ENCODE measurements at regions of chr2 and their contacts with region 1.

Region 1: DNA sequence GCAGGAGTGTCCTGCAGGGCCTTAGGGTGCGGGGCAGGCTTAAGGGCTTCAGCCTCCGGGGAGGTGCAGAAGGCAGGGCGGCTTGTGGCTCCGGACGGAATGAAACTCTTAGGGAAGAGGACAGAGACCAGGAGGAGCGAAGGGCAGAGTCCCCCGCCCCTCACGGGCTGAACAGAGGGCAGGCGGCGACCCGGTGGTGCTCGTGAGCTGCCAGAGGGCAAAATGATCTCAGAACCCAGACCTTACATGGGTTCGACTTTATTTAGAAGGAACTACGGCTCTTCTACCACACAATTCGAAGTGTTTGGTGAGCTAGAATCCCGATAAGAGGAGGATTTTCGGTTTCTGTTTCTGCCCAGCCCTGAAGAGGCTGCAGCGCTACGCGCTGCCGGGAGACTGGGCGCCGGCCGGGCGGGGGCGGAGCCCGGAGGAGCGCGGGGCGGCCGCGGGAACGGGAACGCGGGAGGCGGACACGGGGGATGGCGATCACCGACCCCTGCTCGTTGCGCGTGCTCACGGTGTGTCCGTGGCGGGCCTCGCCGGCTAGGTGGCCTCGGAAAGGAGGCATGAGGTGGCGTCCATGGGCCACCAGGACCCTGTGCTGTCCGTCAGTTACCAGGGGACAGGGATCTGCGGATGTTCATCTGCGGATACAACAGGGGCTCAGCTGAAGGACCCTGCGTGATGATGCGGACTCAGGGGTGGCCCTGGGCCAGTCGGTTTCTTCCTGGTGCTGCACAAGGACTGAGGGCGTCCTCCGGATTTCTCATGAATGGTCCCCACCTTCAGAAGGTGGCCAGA is 4.2 kb upstream of the SP100 start:
- DNase-seq: peak in 8 of 9 experiments; percentile 37 to 83 (median 59)
- ATAC-seq: peak; percentile 67
- H3K4me3 ChIP-seq: peak overlapping the region; percentile 88 to 92
- H3K4me3 Mint-ChIP-seq: peak overlapping the region; percentile 100
- H3K27ac ChIP-seq: peak overlapping the region; percentile 83 to 92
- H3K27ac Mint-ChIP-seq: peak overlapping the region; percentile 100
- H3K4me1 ChIP-seq: peaks cover 53% of the 10 kb centered on the region
- H3K4me1 Mint-ChIP-seq: peaks cover 81% of the 10 kb centered on the region
- H3K27me3 ChIP-seq: no peaks in the 10 kb centered on the region
- H3K27me3 Mint-ChIP-seq: no peaks in the 10 kb centered on the region
- CTCF ChIP-seq: no peak

Region 2: GRCh38 chr2:230219419-230220331 is 192.1 kb before region 1 on chr2 and contains the start of gene SP110:
- CTCF ChIA-PET with region 1: no interaction called
- POLR2A ChIA-PET with region 1: no interaction called
- intact Hi-C with region 1: loop called (anchors 2 kb)
- DNase-seq: peak; percentile 52 to 89 (median 78)
- ATAC-seq: peak; percentile 93
- H3K4me3 ChIP-seq: peak within 1 kb of the TSS; percentile 90 to 96
- H3K4me3 Mint-ChIP-seq: peak within 1 kb of the TSS; percentile 98
- H3K27ac ChIP-seq: peak within 1 kb of the TSS; percentile 82 to 88
- H3K27ac Mint-ChIP-seq: peak within 1 kb of the TSS; percentile 99
- H3K4me1 ChIP-seq: peaks cover 36% of the 10 kb centered on the region
- H3K4me1 Mint-ChIP-seq: peaks cover 60% of the 10 kb centered on the region
- H3K27me3 ChIP-seq: no peaks in the 10 kb centered on the region
- H3K27me3 Mint-ChIP-seq: no peaks in the 10 kb centered on the region
- CTCF ChIP-seq: no peak
- total RNA-seq, gene SP110: 50.6 to 58.1 TPM

Region 3: DNA sequence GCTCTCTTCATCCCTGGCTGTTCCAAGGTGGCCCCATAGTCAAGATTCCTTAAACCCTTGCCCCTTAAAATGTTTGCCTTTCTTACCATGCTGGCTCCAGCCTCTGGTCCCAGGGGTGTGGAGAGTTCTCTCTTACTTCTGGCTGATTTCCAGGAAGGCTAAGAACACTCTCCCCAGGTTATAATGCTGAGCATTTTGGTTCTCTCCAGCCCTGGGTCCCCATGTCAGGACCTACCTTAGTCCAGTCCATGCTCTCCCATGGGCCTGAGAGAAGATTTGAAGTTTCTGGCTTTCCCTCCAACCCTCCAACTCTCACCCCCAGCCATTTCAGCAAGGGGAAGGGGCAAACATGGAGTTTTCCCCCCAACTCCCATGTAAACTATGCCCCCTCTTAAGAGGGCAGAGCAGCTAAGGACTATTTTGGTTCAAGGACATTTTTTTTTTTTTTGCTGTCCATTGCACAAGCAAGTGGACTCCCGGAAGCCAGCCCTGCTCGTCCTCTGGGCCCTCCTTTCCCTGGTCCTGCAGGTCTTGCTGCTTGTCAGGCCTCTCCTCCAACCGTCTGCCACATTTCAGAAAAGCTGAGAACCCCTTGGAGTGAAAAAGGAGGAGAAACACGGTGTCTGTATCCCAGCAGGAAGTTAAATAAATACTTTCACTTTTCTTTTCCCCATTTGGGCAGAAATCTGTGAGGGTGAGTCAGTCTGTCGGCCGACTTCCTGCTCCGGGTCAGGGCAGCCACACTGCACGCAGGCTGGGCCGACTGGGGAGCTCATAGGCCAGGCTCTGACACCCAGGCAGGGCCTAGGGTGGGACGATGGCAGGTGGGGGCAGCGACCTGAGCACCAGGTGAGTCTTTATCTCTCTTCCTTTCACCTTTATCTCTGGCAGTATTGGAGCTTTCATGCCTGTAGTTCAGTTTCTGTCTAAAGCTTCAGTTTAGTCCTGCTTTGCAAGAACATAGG is 85.0 kb before region 1 on chr2 and contains the start of gene SP140L:
- CTCF ChIA-PET with region 1: no interaction called
- POLR2A ChIA-PET with region 1: interaction called, 5 read pairs
- intact Hi-C with region 1: loop called (anchors 5 kb)
- DNase-seq: peak; percentile 56 to 91 (median 82)
- ATAC-seq: peak; percentile 100
- H3K4me3 ChIP-seq: peak within 1 kb of the TSS; percentile 63 to 80
- H3K4me3 Mint-ChIP-seq: peak within 1 kb of the TSS; percentile 96
- H3K27ac ChIP-seq: peak within 1 kb of the TSS; percentile 88 to 90
- H3K27ac Mint-ChIP-seq: peak within 1 kb of the TSS; percentile 99
- H3K4me1 ChIP-seq: peaks cover 44% of the 10 kb centered on the region
- H3K4me1 Mint-ChIP-seq: peaks cover 80% of the 10 kb centered on the region
- H3K27me3 ChIP-seq: no peaks in the 10 kb centered on the region
- H3K27me3 Mint-ChIP-seq: no peaks in the 10 kb centered on the region
- CTCF ChIP-seq: no peak
- total RNA-seq, gene SP140L: 69.8 to 70.5 TPM

Region 4: GRCh38 chr2:230447455-230448451 is 36.0 kb after region 1 on chr2:
- CTCF ChIA-PET with region 1: no interaction called
- POLR2A ChIA-PET with region 1: interaction called, 3 read pairs
- intact Hi-C with region 1: loop called (anchors 5 kb)
- DNase-seq: peak in 2 of 9 experiments; percentile 46 to 71
- ATAC-seq: peak; percentile 81
- H3K4me3 ChIP-seq: no peak overlapping the region
- H3K4me3 Mint-ChIP-seq: peak overlapping the region; percentile 40
- H3K27ac ChIP-seq: peak overlapping the region; percentile 30 to 32
- H3K27ac Mint-ChIP-seq: peak overlapping the region; percentile 91
- H3K4me1 ChIP-seq: peaks cover 30% of the 10 kb centered on the region
- H3K4me1 Mint-ChIP-seq: peaks cover 56% of the 10 kb centered on the region
- H3K27me3 ChIP-seq: no peaks in the 10 kb centered on the region
- H3K27me3 Mint-ChIP-seq: no peaks in the 10 kb centered on the region
- CTCF ChIP-seq: no peak

Region 5: DNA sequence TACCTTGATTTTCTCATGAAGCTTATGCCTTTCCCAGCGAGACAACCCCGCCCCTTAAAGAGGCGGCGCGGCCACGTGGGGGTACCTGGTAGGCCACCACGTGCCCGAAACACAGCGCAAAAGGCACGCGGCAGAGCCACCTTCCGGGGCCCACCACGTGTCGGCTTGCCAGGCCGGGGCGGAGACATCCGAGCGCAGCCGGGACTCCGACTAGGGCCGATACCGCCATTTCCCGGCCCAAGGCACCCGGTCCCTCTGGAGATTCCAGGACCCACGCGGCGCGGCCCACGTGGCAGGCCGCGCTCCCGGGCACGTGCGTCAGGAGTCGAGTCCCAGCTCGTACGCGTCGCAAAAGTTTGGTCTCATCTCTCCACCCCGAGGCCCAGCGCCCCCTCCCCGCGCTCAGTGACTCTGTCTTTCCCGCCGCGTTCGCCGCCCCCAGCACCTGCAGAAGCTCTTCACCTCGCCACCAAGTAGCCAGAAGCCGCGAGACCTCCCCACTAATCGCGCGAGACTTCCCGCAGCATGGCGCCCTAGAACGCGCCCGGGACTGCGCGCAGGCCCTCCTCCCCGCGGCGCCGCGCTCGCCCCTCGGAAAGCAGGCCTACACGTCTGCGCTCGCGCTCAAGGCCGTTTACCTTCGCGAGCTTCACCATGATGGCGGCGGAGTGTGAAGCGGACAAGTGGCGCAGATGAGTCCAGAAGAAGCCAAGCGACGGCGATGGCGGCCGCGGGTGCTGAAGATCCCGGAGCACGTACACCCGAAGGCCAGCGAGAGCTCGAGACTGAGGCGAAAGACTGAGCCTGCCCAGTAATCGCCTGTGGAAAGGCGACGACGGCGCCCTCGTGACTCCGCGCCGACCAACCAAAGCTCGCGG is 1052.2 kb after region 1 on chr2 and contains the start of gene NCL:
- CTCF ChIA-PET with region 1: no interaction called
- POLR2A ChIA-PET with region 1: no interaction called
- intact Hi-C with region 1: loop called in 1 of 2 experiments (anchors 10 kb)
- DNase-seq: peak; percentile 71 to 94 (median 82)
- ATAC-seq: peak; percentile 62
- H3K4me3 ChIP-seq: peak within 1 kb of the TSS; percentile 97
- H3K4me3 Mint-ChIP-seq: peak within 1 kb of the TSS; percentile 96
- H3K27ac ChIP-seq: peak within 1 kb of the TSS; percentile 97 to 98
- H3K27ac Mint-ChIP-seq: peak within 1 kb of the TSS; percentile 100
- H3K4me1 ChIP-seq: peaks cover 36% of the 10 kb centered on the region
- H3K4me1 Mint-ChIP-seq: peaks cover 52% of the 10 kb centered on the region
- H3K27me3 ChIP-seq: no peaks in the 10 kb centered on the region
- H3K27me3 Mint-ChIP-seq: no peaks in the 10 kb centered on the region
- CTCF ChIP-seq: no peak
- total RNA-seq, gene NCL: 390 to 394 TPM